ENCODE measurements at regions of chr2 and their contacts with region 1.

Region 1: DNA sequence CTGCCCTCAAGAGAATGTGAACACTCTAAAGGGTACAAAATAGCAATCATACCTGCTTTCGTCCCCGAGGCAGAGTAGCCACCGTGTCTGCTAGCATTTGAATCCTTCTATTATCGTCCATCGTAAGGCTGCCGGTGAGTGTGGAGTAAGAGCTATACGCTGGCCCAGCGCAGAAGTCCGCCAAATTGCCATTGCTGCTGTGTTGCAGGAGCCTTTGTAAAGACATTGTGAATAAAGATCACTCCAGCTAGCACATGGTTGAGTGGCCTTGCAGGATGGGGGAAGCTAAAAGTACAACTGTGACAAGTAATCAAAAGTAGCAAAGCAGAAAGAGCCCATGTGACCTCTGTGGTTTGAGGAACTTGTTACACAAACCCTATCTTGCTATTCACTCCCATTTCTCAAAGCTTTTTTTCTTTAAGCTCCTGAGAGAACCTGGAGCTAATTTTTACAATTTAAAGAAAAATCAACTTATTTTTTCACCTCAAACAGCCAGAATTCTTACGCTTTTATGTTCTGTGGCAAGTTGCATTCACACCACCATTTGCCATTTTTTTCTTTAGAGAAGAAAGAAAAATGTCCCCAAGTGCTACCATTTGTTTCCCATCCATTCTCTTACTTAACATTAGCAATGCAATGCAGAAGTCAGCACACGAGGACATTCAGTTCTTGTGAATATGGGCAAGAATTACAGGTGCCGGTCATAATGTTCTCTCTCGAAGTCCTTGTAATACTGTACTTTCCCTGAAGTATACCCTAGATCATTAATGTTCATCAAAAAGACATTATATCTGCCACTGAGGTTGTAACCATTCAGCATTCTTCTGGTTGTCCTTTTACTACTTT is at the start of gene CYTIP:
- DNase-seq: peak; percentile 93
- H3K4me3 Mint-ChIP-seq: peak within 1 kb of the TSS; percentile 92
- H3K27ac Mint-ChIP-seq: peak within 1 kb of the TSS; percentile 97
- H3K4me1 Mint-ChIP-seq: peaks cover 50% of the 10 kb centered on the region
- H3K27me3 Mint-ChIP-seq: no peaks in the 10 kb centered on the region
- total RNA-seq, gene CYTIP: 320 and 321 TPM in 2 replicates

Region 2: GRCh38 chr2:157327621-157328500 is 116.2 kb before region 1 on chr2:
- intact Hi-C with region 1: loop called (anchors 1 kb)
- DNase-seq: peak; percentile 95
- H3K4me3 Mint-ChIP-seq: peak overlapping the region; percentile 32
- H3K27ac Mint-ChIP-seq: peak overlapping the region; percentile 34
- H3K4me1 Mint-ChIP-seq: peaks cover 37% of the 10 kb centered on the region
- H3K27me3 Mint-ChIP-seq: no peaks in the 10 kb centered on the region

Region 3: DNA sequence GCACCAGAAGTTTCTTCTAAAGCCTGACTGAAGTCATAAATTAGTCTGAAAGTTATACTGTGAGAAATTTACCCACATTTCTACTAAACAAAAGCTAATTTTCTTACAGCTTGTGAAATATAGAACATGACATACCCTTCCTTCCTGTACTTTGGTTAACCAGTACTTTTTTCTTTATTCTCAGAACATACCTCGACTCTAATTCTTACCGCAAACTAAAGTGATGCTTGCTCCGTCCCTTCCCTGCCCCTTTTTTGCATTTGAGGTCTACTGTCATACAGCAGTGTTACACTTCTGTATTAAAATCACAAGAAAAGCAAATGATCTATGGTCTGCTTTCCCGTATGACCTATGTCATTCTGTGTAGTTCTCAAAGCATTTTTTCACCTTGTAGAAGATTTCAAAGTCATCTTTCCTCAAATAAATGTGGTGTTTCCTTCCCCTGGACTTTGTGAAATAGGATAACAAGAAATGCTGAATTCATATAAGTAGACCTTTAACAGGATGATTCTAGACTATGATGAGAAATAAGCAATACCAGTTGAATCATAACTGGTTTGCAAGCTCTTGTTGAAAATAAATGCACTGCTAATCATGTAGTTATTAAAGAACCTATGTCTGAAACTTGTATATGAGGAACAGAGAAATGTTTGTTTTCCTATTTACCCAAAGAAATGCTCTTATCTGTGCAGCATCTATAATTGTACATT is 30.5 kb before region 1 on chr2:
- intact Hi-C with region 1: loop called (anchors 1 kb)
- DNase-seq: peak; percentile 88
- H3K4me3 Mint-ChIP-seq: peak overlapping the region; percentile 87
- H3K27ac Mint-ChIP-seq: peak overlapping the region; percentile 95
- H3K4me1 Mint-ChIP-seq: peaks cover 71% of the 10 kb centered on the region
- H3K27me3 Mint-ChIP-seq: no peaks in the 10 kb centered on the region

Region 4: DNA sequence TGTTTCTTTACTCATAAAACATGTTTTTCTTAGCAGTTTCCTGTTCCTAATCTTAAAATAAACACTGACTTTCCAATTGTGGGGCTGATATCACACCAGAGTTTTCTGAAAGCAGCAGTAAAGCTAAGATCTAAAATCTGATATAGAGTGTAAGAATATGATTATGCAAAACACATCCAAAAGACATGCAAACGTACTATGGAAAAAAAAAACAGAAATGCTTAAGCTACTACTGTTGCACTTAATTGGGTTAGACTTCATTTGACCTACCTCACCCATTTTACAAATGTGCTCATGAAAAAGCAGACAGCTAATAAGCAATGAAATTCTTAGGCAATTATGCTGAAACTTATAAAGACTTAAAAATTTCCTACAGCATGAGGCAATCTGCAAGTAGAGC is 10.6 kb before region 1 on chr2:
- intact Hi-C with region 1: loop called (anchors 1 kb)
- DNase-seq: peak; percentile 56
- H3K4me3 Mint-ChIP-seq: peak overlapping the region; percentile 92
- H3K27ac Mint-ChIP-seq: peak overlapping the region; percentile 90
- H3K4me1 Mint-ChIP-seq: peaks cover 78% of the 10 kb centered on the region
- H3K27me3 Mint-ChIP-seq: no peaks in the 10 kb centered on the region

Region 5: GRCh38 chr2:157480182-157480961 is 36.4 kb after region 1 on chr2:
- intact Hi-C with region 1: loop called (anchors 1 kb)
- DNase-seq: peak; percentile 88
- H3K4me3 Mint-ChIP-seq: peak overlapping the region; percentile 84
- H3K27ac Mint-ChIP-seq: peak overlapping the region; percentile 96
- H3K4me1 Mint-ChIP-seq: peaks cover 77% of the 10 kb centered on the region
- H3K27me3 Mint-ChIP-seq: no peaks in the 10 kb centered on the region

Region 6: GRCh38 chr2:157538064-157538463 is 94.0 kb after region 1 on chr2:
- intact Hi-C with region 1: no loop called
- DNase-seq: no peak
- H3K4me3 Mint-ChIP-seq: no peak overlapping the region
- H3K27ac Mint-ChIP-seq: no peak overlapping the region
- H3K4me1 Mint-ChIP-seq: no peaks in the 10 kb centered on the region
- H3K27me3 Mint-ChIP-seq: no peaks in the 10 kb centered on the region

Region 7: DNA sequence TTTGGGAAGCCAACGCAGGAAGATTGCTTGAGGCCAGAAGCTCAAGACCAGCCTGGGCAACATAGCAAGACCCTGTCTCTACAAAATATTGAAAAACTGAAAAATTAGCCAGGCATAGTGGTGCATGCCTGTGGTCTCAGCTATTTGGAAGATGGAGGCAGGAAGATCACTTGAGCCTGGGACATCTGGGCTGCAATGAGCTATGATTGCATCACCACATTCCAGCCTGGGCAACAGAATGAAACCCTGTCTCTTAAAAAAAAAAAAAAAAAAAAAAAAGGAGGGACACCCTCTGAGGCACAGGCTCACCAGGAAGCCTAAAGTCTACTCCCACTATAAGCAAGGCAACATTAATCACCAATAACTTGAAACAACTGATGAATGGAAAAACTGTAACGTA is 861.5 kb after region 1 on chr2:
- intact Hi-C with region 1: no loop called
- DNase-seq: no peak
- H3K4me3 Mint-ChIP-seq: no peak overlapping the region
- H3K27ac Mint-ChIP-seq: no peak overlapping the region
- H3K4me1 Mint-ChIP-seq: no peaks in the 10 kb centered on the region
- H3K27me3 Mint-ChIP-seq: no peaks in the 10 kb centered on the region